Activated CD8-positive, alpha-beta T cell treated with anti-CD3 and anti-CD28 coated beads, Interleukin-2, amount 10 ng/mL, durations not matched to agents 7 days and 5 days (primary cell): ENCODE measurements at regions of chr16 and their contacts with region 1.

Region 1: GRCh38 chr16:80526425-80527061 is 14.2 kb upstream of the DYNLRB2 start:
- DNase-seq: peak; percentile 72
- ATAC-seq: peak; percentile 57
- H3K4me3 Mint-ChIP-seq: no peak overlapping the region
- H3K27ac Mint-ChIP-seq: no peak overlapping the region
- H3K4me1 Mint-ChIP-seq: peaks cover 11% of the 10 kb centered on the region
- H3K27me3 Mint-ChIP-seq: peaks cover 26% of the 10 kb centered on the region

Region 2: DNA sequence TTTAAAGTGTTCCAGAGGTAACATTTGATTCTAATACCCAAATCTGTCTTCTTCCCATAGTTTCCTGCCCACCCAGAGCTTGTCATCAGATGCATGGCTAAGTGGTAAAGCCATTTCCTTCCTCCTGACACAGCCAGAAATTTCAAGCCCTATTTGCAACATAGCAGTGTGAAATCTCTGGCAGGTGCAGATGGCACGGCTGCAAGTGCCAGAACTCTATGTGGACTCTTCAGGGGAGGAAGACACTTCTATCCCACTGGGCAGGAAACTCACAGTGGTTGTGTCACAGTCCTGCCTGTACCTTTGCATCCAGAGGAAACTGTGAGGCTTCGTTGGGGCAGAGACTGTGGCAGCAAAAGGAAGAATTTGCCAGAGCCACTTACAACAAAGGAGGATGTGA is 27.5 kb after region 1 on chr16:
- CTCF ChIA-PET with region 1: interaction called, 11 read pairs
- POLR2A ChIA-PET with region 1: no interaction called
- DNase-seq: no peak
- ATAC-seq: no peak
- H3K4me3 Mint-ChIP-seq: no peak overlapping the region
- H3K27ac Mint-ChIP-seq: no peak overlapping the region
- H3K4me1 Mint-ChIP-seq: peaks cover 25% of the 10 kb centered on the region
- H3K27me3 Mint-ChIP-seq: peaks cover 8% of the 10 kb centered on the region

Region 3: DNA sequence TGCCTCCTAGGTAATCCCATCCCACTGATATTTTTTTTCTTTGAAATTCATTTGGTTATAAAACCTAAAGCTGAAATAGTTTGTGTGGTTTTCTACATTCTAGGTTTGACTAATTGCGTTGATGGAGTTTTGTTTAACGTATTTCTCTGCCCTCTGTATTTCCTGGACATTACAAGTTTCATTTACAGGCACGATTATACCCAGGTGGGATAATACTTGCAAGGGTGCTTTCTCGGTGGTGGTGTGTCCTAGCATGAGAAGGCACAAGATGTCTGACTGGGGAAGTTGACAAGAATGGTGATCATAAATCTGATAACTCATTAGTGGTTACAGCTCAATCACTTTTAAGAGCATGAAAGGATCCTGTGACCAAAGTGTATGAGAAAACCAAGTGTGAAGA is 59.2 kb after region 1 on chr16:
- CTCF ChIA-PET with region 1: interaction called, 57 read pairs
- POLR2A ChIA-PET with region 1: no interaction called
- DNase-seq: no peak
- ATAC-seq: peak; percentile 42
- H3K4me3 Mint-ChIP-seq: peak overlapping the region; percentile 12
- H3K27ac Mint-ChIP-seq: no peak overlapping the region
- H3K4me1 Mint-ChIP-seq: peaks cover 66% of the 10 kb centered on the region
- H3K27me3 Mint-ChIP-seq: peaks cover 32% of the 10 kb centered on the region

Region 4: GRCh38 chr16:80659865-80660264 is 133.3 kb after region 1 on chr16:
- CTCF ChIA-PET with region 1: interaction called, 12 read pairs
- POLR2A ChIA-PET with region 1: no interaction called
- DNase-seq: no peak
- ATAC-seq: no peak
- H3K4me3 Mint-ChIP-seq: no peak overlapping the region
- H3K27ac Mint-ChIP-seq: no peak overlapping the region
- H3K4me1 Mint-ChIP-seq: peaks cover 29% of the 10 kb centered on the region
- H3K27me3 Mint-ChIP-seq: peaks cover 2% of the 10 kb centered on the region

Region 5: DNA sequence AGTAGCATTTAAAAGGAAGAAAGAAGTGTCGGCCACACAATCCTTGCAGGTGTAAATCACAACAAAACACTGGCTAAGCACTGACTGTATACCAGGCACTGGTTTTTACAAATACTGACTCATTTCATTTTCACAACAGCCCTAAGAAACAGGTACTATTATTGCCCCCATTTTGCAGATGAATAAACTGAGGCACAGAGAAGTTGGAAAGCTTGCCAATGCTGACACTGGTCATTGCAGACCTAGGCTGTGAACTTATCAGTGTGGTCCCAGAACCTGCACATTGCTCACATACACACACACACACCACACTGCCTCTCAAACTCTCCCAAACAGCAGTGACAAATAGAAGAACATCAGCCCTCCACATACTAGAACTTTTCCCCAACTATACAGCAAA is 240.3 kb after region 1 on chr16:
- CTCF ChIA-PET with region 1: interaction called, 13 read pairs
- POLR2A ChIA-PET with region 1: no interaction called
- DNase-seq: no peak
- ATAC-seq: no peak
- H3K4me3 Mint-ChIP-seq: no peak overlapping the region
- H3K27ac Mint-ChIP-seq: no peak overlapping the region
- H3K4me1 Mint-ChIP-seq: peaks cover 8% of the 10 kb centered on the region
- H3K27me3 Mint-ChIP-seq: no peaks in the 10 kb centered on the region